ENCODE measurements at regions of chr6 and their contacts with region 1.

Region 1: GRCh38 chr6:135088818-135089809 is 34.5 kb upstream of the HBS1L start:
- DNase-seq: peak; percentile 45
- CTCF ChIP-seq: peak; percentile 14

Region 2: GRCh38 chr6:135075018-135075417 is 14.1 kb before region 1 on chr6:
- CTCF ChIA-PET with region 1: interaction called, 17 read pairs
- POLR2A ChIA-PET with region 1: no interaction called
- DNase-seq: no peak
- CTCF ChIP-seq: peak; percentile 15

Region 3: DNA sequence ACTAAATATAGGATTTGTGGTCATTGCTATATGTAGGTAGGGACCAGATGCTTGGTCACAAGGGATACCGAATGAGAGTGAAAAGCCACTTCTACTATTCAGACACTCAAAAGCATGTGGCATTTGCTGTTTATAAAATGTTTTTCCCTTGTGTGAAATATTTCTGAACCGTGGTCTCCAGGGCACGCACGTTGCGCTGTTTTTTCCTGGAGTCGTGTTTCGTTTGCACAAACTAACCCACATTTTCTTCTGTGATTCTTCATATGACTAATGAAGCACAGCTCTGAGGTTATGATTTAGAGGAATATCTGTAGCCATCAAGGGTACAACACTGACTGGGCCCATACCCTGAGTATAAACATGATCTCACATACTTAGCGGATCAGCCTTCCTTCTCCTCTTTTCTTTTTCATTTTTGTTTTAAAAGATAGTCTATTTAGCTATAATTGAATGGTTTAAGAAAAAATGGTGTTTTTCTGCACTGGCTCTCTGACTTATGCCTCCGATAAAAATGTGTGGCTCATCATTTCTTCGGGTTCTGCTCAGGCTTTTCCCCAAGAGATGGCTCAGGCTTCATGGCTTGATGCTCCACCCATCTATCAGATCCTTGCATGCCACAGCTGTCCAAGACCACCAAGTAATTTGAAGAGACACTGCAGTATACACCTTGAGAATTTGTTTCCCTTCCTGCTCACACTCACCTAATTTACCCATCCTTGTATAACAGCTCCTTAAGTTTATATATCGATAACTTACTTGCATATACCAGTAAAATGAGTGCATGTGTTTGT is 25.4 kb after region 1 on chr6:
- CTCF ChIA-PET with region 1: interaction called, 10 read pairs
- POLR2A ChIA-PET with region 1: interaction called, 3 read pairs
- DNase-seq: peak; percentile 11
- CTCF ChIP-seq: no peak

Region 4: GRCh38 chr6:135128268-135128914 is 39.3 kb after region 1 on chr6:
- CTCF ChIA-PET with region 1: interaction called, 11 read pairs
- POLR2A ChIA-PET with region 1: no interaction called
- DNase-seq: peak; percentile 66
- CTCF ChIP-seq: no peak

Region 5: GRCh38 chr6:135162678-135163439 is 73.7 kb after region 1 on chr6:
- CTCF ChIA-PET with region 1: interaction called, 7 read pairs
- POLR2A ChIA-PET with region 1: interaction called, 12 read pairs
- DNase-seq: no peak
- CTCF ChIP-seq: peak; percentile 71

Measured in GM10248 (cell line).